GM12878 (cell line): ENCODE measurements at regions of chr22 and their contacts with region 1.

Region 1: DNA sequence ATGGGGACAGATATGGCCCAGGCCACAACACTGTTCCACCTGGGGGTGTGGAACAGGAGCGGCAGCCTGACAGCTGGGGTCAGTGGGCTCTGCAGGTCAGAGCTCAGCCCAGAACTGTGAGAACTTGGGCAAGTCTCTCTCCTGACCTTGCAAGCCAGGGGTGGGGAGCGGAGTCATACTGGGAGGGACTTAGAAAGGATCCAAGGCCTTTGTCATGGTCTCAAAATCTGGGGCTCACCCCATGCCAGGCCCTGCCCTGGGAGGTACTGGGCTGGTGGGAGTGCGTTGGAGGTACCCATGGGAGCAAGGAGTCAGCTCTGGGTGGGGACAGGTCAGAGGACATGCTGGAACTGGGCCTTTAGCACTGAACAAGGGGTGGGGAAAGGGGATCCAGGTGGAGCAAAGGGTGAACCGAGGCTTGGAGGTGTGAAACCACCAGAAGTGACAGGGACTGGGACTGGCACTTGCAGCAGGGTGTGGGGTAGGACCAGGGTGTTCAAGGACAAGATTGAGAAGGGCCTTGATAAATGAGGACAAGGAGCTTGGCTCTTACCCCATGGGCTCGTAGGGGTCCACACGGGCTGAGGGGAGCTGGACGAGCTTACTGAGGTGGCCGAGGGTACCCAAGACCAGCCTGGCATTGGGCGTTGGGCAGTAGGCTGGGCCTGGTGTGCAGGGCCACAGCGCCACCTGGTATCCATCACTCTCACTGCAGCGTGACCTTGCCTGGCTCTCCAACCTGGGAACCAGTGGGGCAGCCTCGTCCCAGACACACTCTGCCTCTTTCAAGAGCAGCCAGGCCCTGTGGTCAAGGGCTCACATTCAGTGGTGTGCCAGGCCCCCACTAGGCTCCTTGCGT is 7.4 kb upstream of the PMM1 start:
- DNase-seq: no peak
- ATAC-seq: peak; percentile 98
- H3K4me3 ChIP-seq: no peak overlapping the region
- H3K27ac ChIP-seq: no peak overlapping the region
- H3K4me1 ChIP-seq: no peaks in the 10 kb centered on the region
- H3K27me3 ChIP-seq: no peaks in the 10 kb centered on the region
- CTCF ChIP-seq: peak; percentile 63 to 83 (median 74)
- EP300 ChIP-seq: no peak
- POLR2A ChIP-seq: no peak
- RAD21 ChIP-seq: peak; percentile 58

Region 2: GRCh38 chr22:41543854-41544670 is 52.9 kb before region 1 on chr22 and contains the start of gene POLR3H:
- CTCF ChIA-PET with region 1: interaction called, 46 read pairs
- POLR2A ChIA-PET with region 1: no interaction called
- RAD21 ChIA-PET with region 1: interaction called, 10 read pairs
- SMC1A ChIA-PET with region 1: interaction called, 8 read pairs
- in situ Hi-C with region 1: no loop called
- intact Hi-C with region 1: loop called (anchors 5 kb)
- DNase-seq: peak; percentile 90
- ATAC-seq: peak; percentile 97
- H3K4me3 ChIP-seq: peak within 1 kb of the TSS; percentile 88
- H3K27ac ChIP-seq: peak within 1 kb of the TSS; percentile 75
- H3K4me1 ChIP-seq: no peaks in the 10 kb centered on the region
- H3K27me3 ChIP-seq: no peaks in the 10 kb centered on the region
- CTCF ChIP-seq: peak; percentile 61 to 86 (median 77)
- EP300 ChIP-seq: no peak
- POLR2A ChIP-seq: peak; percentile 73
- RAD21 ChIP-seq: peak; percentile 28; the same call in 1 of the 2 replicates
- polyA plus RNA-seq, gene POLR3H: 3.5 to 5.8 TPM

Region 3: GRCh38 chr22:41576877-41577276 is 20.1 kb before region 1 on chr22:
- CTCF ChIA-PET with region 1: interaction called, 15 read pairs
- POLR2A ChIA-PET with region 1: no interaction called
- RAD21 ChIA-PET with region 1: no interaction called
- SMC1A ChIA-PET with region 1: no interaction called
- in situ Hi-C with region 1: no loop called
- intact Hi-C with region 1: no loop called
- DNase-seq: no peak
- ATAC-seq: peak; percentile 92
- H3K4me3 ChIP-seq: no peak overlapping the region
- H3K27ac ChIP-seq: no peak overlapping the region
- H3K4me1 ChIP-seq: no peaks in the 10 kb centered on the region
- H3K27me3 ChIP-seq: no peaks in the 10 kb centered on the region
- CTCF ChIP-seq: peak; percentile 62 to 84 (median 76)
- EP300 ChIP-seq: no peak
- POLR2A ChIP-seq: no peak
- RAD21 ChIP-seq: peak; percentile 66

Region 4: GRCh38 chr22:41690336-41690875 is 93.4 kb after region 1 on chr22:
- CTCF ChIA-PET with region 1: no interaction called
- POLR2A ChIA-PET with region 1: no interaction called
- RAD21 ChIA-PET with region 1: no interaction called
- SMC1A ChIA-PET with region 1: no interaction called
- in situ Hi-C with region 1: no loop called
- intact Hi-C with region 1: no loop called
- DNase-seq: no peak
- ATAC-seq: no peak
- H3K4me3 ChIP-seq: no peak overlapping the region
- H3K27ac ChIP-seq: no peak overlapping the region
- H3K4me1 ChIP-seq: peaks cover 3% of the 10 kb centered on the region; the same call in 1 of the 2 replicates
- H3K27me3 ChIP-seq: no peaks in the 10 kb centered on the region
- CTCF ChIP-seq: no peak; a peak in 1 of 6 replicates
- EP300 ChIP-seq: no peak
- POLR2A ChIP-seq: no peak
- RAD21 ChIP-seq: no peak

Region 5: GRCh38 chr22:41713004-41713403 is 116.0 kb after region 1 on chr22:
- CTCF ChIA-PET with region 1: no interaction called
- POLR2A ChIA-PET with region 1: no interaction called
- RAD21 ChIA-PET with region 1: no interaction called
- SMC1A ChIA-PET with region 1: no interaction called
- in situ Hi-C with region 1: no loop called
- intact Hi-C with region 1: no loop called
- DNase-seq: no peak
- ATAC-seq: no peak
- H3K4me3 ChIP-seq: no peak overlapping the region
- H3K27ac ChIP-seq: no peak overlapping the region
- H3K4me1 ChIP-seq: no peaks in the 10 kb centered on the region
- H3K27me3 ChIP-seq: no peaks in the 10 kb centered on the region
- CTCF ChIP-seq: no peak
- EP300 ChIP-seq: no peak
- POLR2A ChIP-seq: no peak
- RAD21 ChIP-seq: no peak

Region 6: GRCh38 chr22:41746567-41747400 is 149.8 kb after region 1 on chr22:
- CTCF ChIA-PET with region 1: no interaction called
- POLR2A ChIA-PET with region 1: no interaction called
- RAD21 ChIA-PET with region 1: no interaction called
- SMC1A ChIA-PET with region 1: no interaction called
- in situ Hi-C with region 1: no loop called
- intact Hi-C with region 1: no loop called
- DNase-seq: peak; percentile 80
- ATAC-seq: peak; percentile 94
- H3K4me3 ChIP-seq: peak overlapping the region; percentile 34; the same call in 1 of the 2 replicates
- H3K27ac ChIP-seq: peak overlapping the region; percentile 69
- H3K4me1 ChIP-seq: peaks cover 42% of the 10 kb centered on the region
- H3K27me3 ChIP-seq: no peaks in the 10 kb centered on the region
- CTCF ChIP-seq: peak; percentile 75 to 81 (median 77)
- EP300 ChIP-seq: peak; percentile 65 to 85
- POLR2A ChIP-seq: no peak
- RAD21 ChIP-seq: peak; percentile 71

Region 7: DNA sequence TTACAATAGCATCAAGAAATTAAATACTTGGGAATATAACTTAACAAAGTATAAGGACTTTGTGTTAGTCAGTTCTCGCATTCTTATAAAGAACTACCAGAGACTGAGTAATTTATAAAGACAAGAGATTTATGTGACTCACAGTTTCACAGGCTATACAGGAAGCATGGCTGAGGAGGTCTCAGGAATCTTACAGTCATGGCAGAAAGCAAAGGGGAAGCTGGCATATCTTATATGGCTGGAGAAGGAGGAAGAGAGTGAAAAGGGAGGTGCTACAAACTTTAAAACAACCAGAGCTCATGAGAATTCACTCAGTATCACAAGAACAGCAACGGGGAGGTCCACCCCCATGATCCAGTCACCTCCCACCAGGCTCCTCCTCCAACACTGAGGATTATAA is 171.4 kb after region 1 on chr22:
- CTCF ChIA-PET with region 1: no interaction called
- POLR2A ChIA-PET with region 1: no interaction called
- RAD21 ChIA-PET with region 1: no interaction called
- SMC1A ChIA-PET with region 1: no interaction called
- in situ Hi-C with region 1: no loop called
- intact Hi-C with region 1: no loop called
- DNase-seq: no peak
- ATAC-seq: peak; percentile 59
- H3K4me3 ChIP-seq: no peak overlapping the region
- H3K27ac ChIP-seq: no peak overlapping the region
- H3K4me1 ChIP-seq: no peaks in the 10 kb centered on the region
- H3K27me3 ChIP-seq: no peaks in the 10 kb centered on the region
- CTCF ChIP-seq: no peak
- EP300 ChIP-seq: no peak
- POLR2A ChIP-seq: no peak
- RAD21 ChIP-seq: no peak